Gastrocnemius medialis (tissue), 4 donors: ENCODE measurements at regions of chr17 and their contacts with region 1.

Region 1: DNA sequence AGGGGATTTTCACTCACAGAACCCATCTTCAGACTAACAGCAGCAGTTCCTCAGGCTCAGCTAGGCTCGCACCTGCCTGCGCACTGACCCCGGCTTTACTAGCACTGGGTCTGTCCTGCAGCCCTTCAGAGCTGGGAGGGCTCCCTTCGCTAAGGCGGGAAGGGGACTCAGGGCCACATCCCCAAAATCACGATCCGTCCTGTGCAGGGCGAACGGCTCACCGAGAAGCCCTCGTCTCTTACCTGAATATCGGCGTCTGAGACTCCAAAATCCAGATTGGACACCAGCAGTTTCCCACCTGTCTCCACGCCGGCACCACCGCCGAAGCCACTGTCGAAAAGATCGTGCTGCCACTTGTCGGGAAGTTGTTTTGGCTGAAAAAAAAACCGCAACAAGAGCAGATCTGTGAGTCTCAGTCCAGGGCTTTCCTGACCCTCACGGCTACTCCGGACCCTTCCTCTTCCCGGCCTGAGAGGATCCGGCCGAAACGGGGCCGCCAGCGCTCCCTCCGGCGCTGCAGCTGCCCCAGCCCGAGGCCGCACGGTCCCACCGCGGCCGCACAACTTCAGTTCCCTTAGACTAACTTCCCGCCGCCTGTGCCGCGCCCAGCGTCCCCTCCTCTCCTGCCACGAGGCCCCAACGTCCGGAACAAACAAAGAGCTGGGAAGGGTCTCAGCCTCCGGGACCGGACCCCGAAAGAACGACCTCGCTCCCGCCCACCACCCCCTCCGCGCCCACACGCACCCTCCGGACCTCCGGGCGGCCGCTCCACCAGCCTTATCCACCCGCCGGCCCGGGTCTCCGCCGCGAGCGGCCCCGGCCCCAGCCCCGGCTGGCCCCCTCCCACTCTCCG is 713 bp downstream of the ALYREF start:
- DNase-seq: peak in 1 of 2 donors; percentile 13
- ATAC-seq: no peak
- H3K4me3 ChIP-seq: peak overlapping the region; percentile 62 to 96 (median 88)
- H3K27ac ChIP-seq: peak overlapping the region; percentile 65 to 98 (median 97)
- H3K4me1 ChIP-seq: peaks cover 31 to 36% of the 10 kb centered on the region in 2 donors
- H3K27me3 ChIP-seq: no peaks in the 10 kb centered on the region
- CTCF ChIP-seq: no peak
- POLR2A ChIP-seq: no peak

Region 2: GRCh38 chr17:81840826-81841778 is 49.6 kb before region 1 on chr17:
- in situ Hi-C with region 1: no loop called
- intact Hi-C with region 1: loop called (anchors 2 kb)
- DNase-seq: peak; percentile 88 to 93
- ATAC-seq: peak; percentile 70
- H3K4me3 ChIP-seq: peak overlapping the region; percentile 25 to 50 (median 38)
- H3K27ac ChIP-seq: peak overlapping the region; percentile 98 to 99 (median 99)
- H3K4me1 ChIP-seq: peaks cover 64 to 67% of the 10 kb centered on the region in 2 donors
- H3K27me3 ChIP-seq: no peaks in the 10 kb centered on the region
- CTCF ChIP-seq: no peak
- POLR2A ChIP-seq: peak; percentile 75 to 86

Region 3: GRCh38 chr17:81871387-81872230 is 19.1 kb before region 1 on chr17:
- in situ Hi-C with region 1: no loop called
- intact Hi-C with region 1: loop called (anchors 1 kb)
- DNase-seq: peak; percentile 92 to 94
- ATAC-seq: peak; percentile 83 to 88
- H3K4me3 ChIP-seq: peak overlapping the region; percentile 78 to 100 (median 90)
- H3K27ac ChIP-seq: peak overlapping the region; percentile 96 to 99 (median 98)
- H3K4me1 ChIP-seq: peaks cover 35 to 37% of the 10 kb centered on the region in 2 donors
- H3K27me3 ChIP-seq: no peaks in the 10 kb centered on the region
- CTCF ChIP-seq: peak in 3 of 5 experiments; percentile 29 to 66 (median 48)
- POLR2A ChIP-seq: peak; percentile 95 to 97

Region 4: DNA sequence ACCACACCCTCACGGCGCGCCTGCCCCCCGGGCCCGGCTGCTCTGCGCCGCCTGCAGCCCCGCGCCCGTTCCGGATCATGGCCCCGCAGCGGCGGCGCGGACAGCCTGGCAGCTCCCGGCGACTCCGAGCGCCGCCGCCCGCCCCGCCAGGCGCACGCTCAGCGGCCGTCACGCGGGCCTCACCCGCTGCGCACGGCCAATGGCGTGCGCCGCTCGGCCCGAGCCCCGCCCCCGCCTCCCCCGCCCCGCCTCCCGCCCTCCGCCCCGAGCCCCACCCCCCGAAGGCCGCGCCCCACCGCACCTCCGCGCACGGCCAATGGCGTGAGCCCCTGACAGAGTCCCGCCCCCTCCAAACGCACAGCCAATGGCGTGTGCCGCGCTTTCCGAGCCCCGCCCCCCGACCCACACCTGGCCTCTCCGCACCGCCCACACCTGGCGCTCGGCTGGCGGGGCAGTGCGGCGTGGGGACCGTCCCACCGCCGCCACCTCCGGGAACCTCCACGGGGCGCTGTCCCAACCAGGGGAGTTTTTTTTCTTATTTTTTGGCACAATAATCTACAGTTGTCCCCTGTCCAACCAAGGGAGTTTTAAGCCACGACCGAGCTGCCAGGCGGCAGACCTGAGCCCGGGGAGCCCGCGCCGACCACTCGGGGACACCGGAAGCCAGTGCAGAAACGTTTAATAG is 20.7 kb after region 1 on chr17 and contains the start of gene PCYT2:
- in situ Hi-C with region 1: no loop called
- intact Hi-C with region 1: loop called (anchors 1 kb)
- DNase-seq: peak; percentile 87 to 90
- ATAC-seq: peak; percentile 78 to 81
- H3K4me3 ChIP-seq: peak within 1 kb of the TSS; percentile 61 to 78 (median 63)
- H3K27ac ChIP-seq: peak within 1 kb of the TSS; percentile 72 to 81 (median 77)
- H3K4me1 ChIP-seq: peaks cover 21 to 27% of the 10 kb centered on the region in 2 donors
- H3K27me3 ChIP-seq: no peaks in the 10 kb centered on the region
- CTCF ChIP-seq: peak in 2 of 5 experiments; percentile 10 to 21
- POLR2A ChIP-seq: peak; percentile 77 to 86
- total RNA-seq, gene PCYT2: 22.6 to 44.8 (median 37.1) TPM

Region 5: DNA sequence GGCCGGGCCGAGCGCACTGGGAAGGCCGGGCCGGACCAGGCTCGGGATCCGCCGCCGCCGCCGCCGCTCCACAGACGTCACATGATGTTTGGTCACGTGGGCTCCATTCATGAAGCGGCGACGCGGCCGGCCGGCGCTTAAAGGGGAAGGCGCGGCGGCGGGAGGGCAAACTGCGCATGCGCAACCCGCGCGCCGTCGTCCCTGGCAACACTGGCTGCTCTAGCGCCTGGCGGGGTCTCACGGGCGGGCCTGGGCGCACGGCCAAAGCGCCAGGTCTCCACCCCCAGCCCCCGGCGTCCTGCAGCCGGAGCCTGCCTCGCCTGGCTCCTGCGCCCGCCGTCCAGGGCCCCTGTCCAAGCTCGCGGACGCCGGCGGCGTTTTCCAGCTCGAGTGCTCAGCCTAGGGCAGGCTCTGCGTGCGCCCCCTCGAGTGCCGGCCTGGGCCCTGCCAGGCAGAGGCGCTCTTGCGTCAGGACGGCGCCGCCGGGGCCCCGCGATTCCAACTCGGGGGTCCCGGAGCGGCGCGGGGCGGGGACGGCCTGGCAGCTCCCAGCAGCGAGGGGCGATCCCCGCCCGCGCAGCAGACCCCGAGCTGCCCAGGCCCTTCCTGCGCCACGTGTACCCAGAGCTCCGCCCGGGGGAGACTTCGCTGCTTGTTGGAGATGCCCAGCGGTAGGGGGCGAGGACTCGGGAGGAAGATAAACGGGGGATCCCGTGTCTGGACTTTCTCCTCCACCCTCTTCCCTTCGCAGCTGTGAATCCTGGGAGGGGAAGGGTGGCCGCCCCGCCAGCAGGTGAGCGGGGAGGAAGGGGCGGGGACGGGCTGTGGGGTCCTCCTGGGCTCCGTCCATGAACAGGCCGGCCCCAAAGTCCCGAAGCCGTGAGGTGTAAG is 37.2 kb after region 1 on chr17 and contains the start of gene MAFG:
- in situ Hi-C with region 1: no loop called
- intact Hi-C with region 1: loop called (anchors 2 kb)
- DNase-seq: peak; percentile 82 to 86
- ATAC-seq: peak; percentile 55 to 59
- H3K4me3 ChIP-seq: peak within 1 kb of the TSS; percentile 68 to 89 (median 77)
- H3K27ac ChIP-seq: peak within 1 kb of the TSS; percentile 90 to 98 (median 93)
- H3K4me1 ChIP-seq: peaks cover 38 to 40% of the 10 kb centered on the region in 2 donors
- H3K27me3 ChIP-seq: peaks cover 0 to 3% (median 0%) of the 10 kb centered on the region in 3 donors
- CTCF ChIP-seq: peak in 4 of 5 experiments; percentile 1 to 20 (median 19)
- POLR2A ChIP-seq: peak; percentile 92 to 95
- total RNA-seq, gene MAFG: 37.1 to 65.5 (median 51.9) TPM

Region 6: GRCh38 chr17:81948635-81949378 is 58.1 kb after region 1 on chr17:
- in situ Hi-C with region 1: no loop called
- intact Hi-C with region 1: no loop called
- DNase-seq: no peak
- ATAC-seq: no peak
- H3K4me3 ChIP-seq: no peak overlapping the region
- H3K27ac ChIP-seq: peak overlapping the region in 3 of 4 donors; percentile 40 to 62 (median 48)
- H3K4me1 ChIP-seq: peaks cover 0 to 7% of the 10 kb centered on the region in 2 donors
- H3K27me3 ChIP-seq: no peaks in the 10 kb centered on the region
- CTCF ChIP-seq: no peak
- POLR2A ChIP-seq: no peak